GM12878 (cell line): ENCODE measurements at regions of chr12 and their contacts with region 1.

Region 1: GRCh38 chr12:96516472-96517430 is 27.4 kb downstream of the CFAP54 start:
- DNase-seq: peak; percentile 95
- ATAC-seq: peak; percentile 80
- H3K4me3 ChIP-seq: peak overlapping the region; percentile 24; the same call in 1 of the 2 replicates
- H3K27ac ChIP-seq: peak overlapping the region; percentile 64
- H3K4me1 ChIP-seq: peaks cover 16% of the 10 kb centered on the region
- H3K27me3 ChIP-seq: no peaks in the 10 kb centered on the region
- CTCF ChIP-seq: peak; percentile 42 to 87 (median 60); a peak in 5 of 6 replicates
- EP300 ChIP-seq: no peak
- POLR2A ChIP-seq: no peak
- RAD21 ChIP-seq: peak; percentile 91

Region 2: GRCh38 chr12:95380997-95381786 is 1135.6 kb before region 1 on chr12:
- CTCF ChIA-PET with region 1: no interaction called
- POLR2A ChIA-PET with region 1: no interaction called
- RAD21 ChIA-PET with region 1: no interaction called
- SMC1A ChIA-PET with region 1: no interaction called
- in situ Hi-C with region 1: no loop called
- intact Hi-C with region 1: no loop called
- DNase-seq: no peak
- ATAC-seq: no peak
- H3K4me3 ChIP-seq: no peak overlapping the region
- H3K27ac ChIP-seq: no peak overlapping the region
- H3K4me1 ChIP-seq: no peaks in the 10 kb centered on the region
- H3K27me3 ChIP-seq: no peaks in the 10 kb centered on the region; a peak in 2 of 4 replicates
- CTCF ChIP-seq: no peak
- EP300 ChIP-seq: no peak
- POLR2A ChIP-seq: no peak
- RAD21 ChIP-seq: no peak

Region 3: DNA sequence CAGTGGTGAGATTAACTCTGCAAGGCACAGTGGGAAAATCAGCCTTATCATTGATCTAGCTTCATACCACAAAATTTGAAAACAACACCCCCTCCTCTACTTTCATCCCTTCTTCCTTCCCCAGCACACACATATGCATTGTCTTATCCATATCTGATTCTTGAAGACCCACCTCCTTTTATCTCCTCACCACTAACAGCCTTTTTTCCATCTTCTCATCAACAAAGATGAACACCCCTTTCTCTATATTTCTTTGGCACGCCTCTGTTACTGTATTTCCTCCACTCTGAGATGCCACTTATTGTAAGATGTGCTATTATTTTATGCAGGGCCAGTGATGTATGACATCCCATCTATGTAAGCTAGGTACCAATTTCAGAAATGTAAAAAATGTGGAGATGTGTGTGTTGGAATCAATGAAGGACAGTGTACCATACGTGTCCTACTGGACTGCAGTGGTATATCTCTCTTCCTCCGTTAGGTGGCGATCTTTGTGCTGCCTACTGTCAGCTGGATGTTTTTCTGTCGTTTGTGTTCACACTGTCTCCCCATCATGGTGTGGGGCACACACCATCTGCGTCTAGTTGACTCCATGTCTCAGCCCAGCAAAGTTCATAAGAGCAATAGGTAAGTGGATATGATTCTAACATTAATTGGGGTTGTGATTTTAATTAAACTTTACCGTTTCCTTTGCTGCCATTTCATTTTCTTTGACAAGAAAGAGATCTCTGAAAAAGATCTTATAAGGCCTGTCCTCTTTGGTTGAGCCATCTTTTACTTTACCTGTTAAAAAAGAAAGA is 598.4 kb before region 1 on chr12:
- CTCF ChIA-PET with region 1: interaction called, 20 read pairs
- POLR2A ChIA-PET with region 1: no interaction called
- RAD21 ChIA-PET with region 1: interaction called, 6 read pairs
- SMC1A ChIA-PET with region 1: interaction called, 10 read pairs
- in situ Hi-C with region 1: no loop called
- intact Hi-C with region 1: loop called (anchors 5 kb)
- DNase-seq: no peak
- ATAC-seq: peak; percentile 99
- H3K4me3 ChIP-seq: no peak overlapping the region
- H3K27ac ChIP-seq: no peak overlapping the region
- H3K4me1 ChIP-seq: no peaks in the 10 kb centered on the region
- H3K27me3 ChIP-seq: peaks cover 2 to 3% of the 10 kb centered on the region in 2 experiments; a peak in 3 of 4 replicates
- CTCF ChIP-seq: peak; percentile 77 to 84 (median 80)
- EP300 ChIP-seq: no peak
- POLR2A ChIP-seq: no peak
- RAD21 ChIP-seq: peak; percentile 74

Region 4: GRCh38 chr12:96035278-96036236 is 481.2 kb before region 1 on chr12 and contains the start of gene LTA4H:
- CTCF ChIA-PET with region 1: interaction called, 12 read pairs
- POLR2A ChIA-PET with region 1: no interaction called
- RAD21 ChIA-PET with region 1: no interaction called
- SMC1A ChIA-PET with region 1: no interaction called
- in situ Hi-C with region 1: no loop called
- intact Hi-C with region 1: no loop called
- DNase-seq: peak; percentile 97
- ATAC-seq: peak; percentile 93
- H3K4me3 ChIP-seq: peak within 1 kb of the TSS; percentile 77
- H3K27ac ChIP-seq: peak within 1 kb of the TSS; percentile 38; the same call in 1 of the 2 replicates
- H3K4me1 ChIP-seq: peaks cover 4% of the 10 kb centered on the region; the same call in 1 of the 2 replicates
- H3K27me3 ChIP-seq: no peaks in the 10 kb centered on the region
- CTCF ChIP-seq: no peak
- EP300 ChIP-seq: no peak; a peak in 1 of 4 replicates
- POLR2A ChIP-seq: peak; percentile 95
- RAD21 ChIP-seq: no peak
- polyA plus RNA-seq, gene LTA4H: 47.2 to 47.4 TPM

Region 5: GRCh38 chr12:96208801-96209549 is 307.8 kb before region 1 on chr12:
- CTCF ChIA-PET with region 1: interaction called, 31 read pairs
- POLR2A ChIA-PET with region 1: no interaction called
- RAD21 ChIA-PET with region 1: interaction called, 62 read pairs
- SMC1A ChIA-PET with region 1: interaction called, 73 read pairs
- in situ Hi-C with region 1: loop called (anchors 5 kb)
- intact Hi-C with region 1: loop called (anchors 2 kb)
- DNase-seq: no peak
- ATAC-seq: peak; percentile 32
- H3K4me3 ChIP-seq: no peak overlapping the region
- H3K27ac ChIP-seq: no peak overlapping the region
- H3K4me1 ChIP-seq: peaks cover 35% of the 10 kb centered on the region
- H3K27me3 ChIP-seq: no peaks in the 10 kb centered on the region
- CTCF ChIP-seq: no peak
- EP300 ChIP-seq: no peak
- POLR2A ChIP-seq: no peak
- RAD21 ChIP-seq: no peak

Region 6: DNA sequence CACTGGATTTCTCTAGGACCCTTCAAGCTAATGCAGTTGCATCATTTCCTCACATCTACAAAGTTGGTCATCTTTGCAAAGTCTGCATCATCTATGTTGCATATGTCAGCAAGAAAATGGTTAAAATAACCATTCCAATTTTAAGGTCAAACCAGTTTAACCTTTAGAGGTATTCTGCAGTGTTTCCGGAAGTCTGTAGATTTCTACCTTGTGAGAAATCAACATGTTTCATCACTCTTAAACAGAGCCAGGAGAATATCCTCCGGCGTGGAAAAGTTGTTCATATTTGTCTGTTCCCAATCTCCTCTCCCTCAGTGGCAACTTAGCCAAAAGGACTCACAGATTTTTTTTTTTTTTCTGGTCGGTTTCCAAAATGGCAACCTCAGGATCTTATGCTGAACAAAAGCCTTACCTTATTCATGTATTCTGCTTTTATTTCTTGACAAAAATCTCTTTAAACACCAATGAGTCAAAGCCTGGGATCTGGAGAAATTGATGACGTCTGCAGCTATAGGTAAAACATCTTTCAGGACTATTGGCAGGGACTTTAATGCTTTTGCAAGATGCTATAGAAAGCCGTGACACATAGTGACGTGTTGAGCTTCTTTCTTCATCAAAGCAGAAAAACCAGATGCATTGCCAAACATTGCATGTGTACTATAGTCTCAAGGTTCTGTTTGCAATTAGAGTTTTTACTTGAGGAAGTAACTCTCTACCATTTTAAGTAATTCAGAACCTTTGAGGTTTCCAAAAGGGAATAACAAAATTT is 100.5 kb before region 1 on chr12:
- CTCF ChIA-PET with region 1: interaction called, 7 read pairs
- POLR2A ChIA-PET with region 1: no interaction called
- RAD21 ChIA-PET with region 1: interaction called, 9 read pairs
- SMC1A ChIA-PET with region 1: interaction called, 15 read pairs
- in situ Hi-C with region 1: no loop called
- intact Hi-C with region 1: no loop called
- DNase-seq: no peak
- ATAC-seq: no peak
- H3K4me3 ChIP-seq: no peak overlapping the region
- H3K27ac ChIP-seq: no peak overlapping the region
- H3K4me1 ChIP-seq: peaks cover 22% of the 10 kb centered on the region
- H3K27me3 ChIP-seq: no peaks in the 10 kb centered on the region
- CTCF ChIP-seq: no peak
- EP300 ChIP-seq: no peak
- POLR2A ChIP-seq: no peak
- RAD21 ChIP-seq: no peak

Region 7: DNA sequence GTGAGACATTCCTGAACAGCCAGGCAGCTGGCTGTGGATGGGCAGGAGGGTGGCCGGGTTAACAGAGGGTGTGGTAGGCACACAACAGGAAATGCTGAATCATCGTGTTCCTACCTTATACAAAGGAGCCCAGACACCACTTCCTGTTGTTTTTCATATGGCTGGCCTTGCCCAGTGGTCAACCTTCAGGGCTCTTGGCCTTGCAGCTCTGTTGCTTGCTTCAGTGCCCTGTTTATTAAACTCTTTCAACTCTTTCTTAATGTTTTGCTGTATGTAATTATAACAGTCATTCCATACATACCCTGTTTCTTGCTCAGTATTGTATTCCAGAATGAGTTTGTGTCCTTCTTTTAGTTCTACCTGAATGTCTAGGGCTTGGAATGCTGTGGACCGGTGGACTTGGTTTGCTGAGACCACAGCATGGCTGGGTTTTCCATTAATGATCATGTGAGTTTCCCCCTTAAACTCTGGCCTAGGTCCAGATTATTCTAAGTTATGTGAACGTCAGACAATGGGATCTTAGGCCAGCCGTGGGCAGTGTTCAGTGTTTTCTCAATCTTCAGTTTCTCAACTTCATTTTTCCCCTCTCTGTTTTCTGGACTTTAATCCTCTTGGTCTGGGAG is 15.5 kb before region 1 on chr12:
- CTCF ChIA-PET with region 1: interaction called, 304 read pairs
- POLR2A ChIA-PET with region 1: interaction called, 7 read pairs
- RAD21 ChIA-PET with region 1: interaction called, 57 read pairs
- SMC1A ChIA-PET with region 1: interaction called, 237 read pairs
- in situ Hi-C with region 1: no loop called
- intact Hi-C with region 1: loop called (anchors 2 kb)
- DNase-seq: peak; percentile 69
- ATAC-seq: peak; percentile 90
- H3K4me3 ChIP-seq: no peak overlapping the region
- H3K27ac ChIP-seq: peak overlapping the region; percentile 62
- H3K4me1 ChIP-seq: peaks cover 33% of the 10 kb centered on the region
- H3K27me3 ChIP-seq: no peaks in the 10 kb centered on the region
- CTCF ChIP-seq: no peak
- EP300 ChIP-seq: no peak
- POLR2A ChIP-seq: no peak
- RAD21 ChIP-seq: no peak

Region 8: DNA sequence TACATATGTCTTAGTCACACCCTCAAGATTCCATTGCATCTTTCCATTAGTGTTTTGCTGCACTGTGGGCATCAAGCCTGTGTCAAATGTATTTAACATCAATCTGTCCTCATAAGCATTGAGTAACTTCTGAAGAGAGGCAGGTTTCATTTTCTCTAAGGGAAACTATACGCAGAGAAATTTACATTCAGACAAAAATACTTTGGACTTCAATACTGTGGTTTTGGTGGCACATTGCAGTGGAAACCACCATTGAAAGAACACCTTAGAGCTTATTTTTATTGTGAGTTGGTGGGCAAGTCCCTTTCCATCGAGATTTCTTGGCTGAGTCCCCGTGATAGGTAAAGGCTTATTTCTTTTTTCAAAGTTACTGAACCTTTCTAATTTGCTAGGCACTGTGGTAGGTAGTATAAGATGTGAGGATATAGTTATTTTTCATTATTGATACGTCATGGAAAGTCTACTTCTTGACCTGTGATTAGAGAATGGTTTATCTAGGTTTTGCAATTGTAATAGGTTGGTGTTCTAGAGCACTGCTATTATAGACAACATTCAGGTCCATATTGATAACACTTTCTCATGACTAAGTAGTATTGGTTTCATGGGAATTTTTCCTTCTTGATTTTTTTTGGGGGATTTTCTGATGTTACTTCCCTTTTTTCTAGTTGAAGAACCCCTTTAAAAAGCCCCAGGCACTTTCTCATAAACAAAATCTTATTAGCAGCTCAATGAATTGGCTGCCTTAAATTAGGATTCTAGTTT is 54.5 kb after region 1 on chr12:
- CTCF ChIA-PET with region 1: interaction called, 29 read pairs
- POLR2A ChIA-PET with region 1: interaction called, 10 read pairs
- RAD21 ChIA-PET with region 1: interaction called, 30 read pairs
- SMC1A ChIA-PET with region 1: interaction called, 21 read pairs
- in situ Hi-C with region 1: no loop called
- intact Hi-C with region 1: loop called (anchors 2 kb)
- DNase-seq: peak; percentile 93
- ATAC-seq: peak; percentile 87
- H3K4me3 ChIP-seq: peak overlapping the region; percentile 22; the same call in 1 of the 2 replicates
- H3K27ac ChIP-seq: peak overlapping the region; percentile 88
- H3K4me1 ChIP-seq: peaks cover 20% of the 10 kb centered on the region
- H3K27me3 ChIP-seq: no peaks in the 10 kb centered on the region
- CTCF ChIP-seq: no peak
- EP300 ChIP-seq: peak; percentile 74 to 77
- POLR2A ChIP-seq: no peak
- RAD21 ChIP-seq: no peak

Region 9: DNA sequence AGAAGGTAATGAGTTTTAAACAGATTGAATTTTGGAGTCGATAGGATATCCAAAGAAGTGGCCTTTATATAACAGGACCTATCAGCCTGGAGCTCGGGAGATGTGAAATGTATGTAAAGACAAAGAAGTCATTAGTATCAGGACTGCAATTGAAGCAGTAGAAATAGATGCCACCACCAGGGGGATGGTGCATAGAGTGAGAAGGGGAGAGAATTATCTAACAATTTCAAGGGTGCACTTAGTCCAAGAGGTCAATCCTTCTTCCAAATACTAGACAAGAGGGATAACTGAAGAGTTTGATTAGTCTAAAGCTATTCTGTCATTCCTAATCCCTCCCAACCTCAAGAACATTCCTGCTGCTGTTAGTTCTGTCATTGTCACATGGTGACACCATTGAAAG is 100.4 kb after region 1 on chr12:
- CTCF ChIA-PET with region 1: no interaction called
- POLR2A ChIA-PET with region 1: no interaction called
- RAD21 ChIA-PET with region 1: no interaction called
- SMC1A ChIA-PET with region 1: no interaction called
- in situ Hi-C with region 1: no loop called
- intact Hi-C with region 1: no loop called
- DNase-seq: no peak
- ATAC-seq: peak; percentile 51; the same call in 2 of the 3 replicates
- H3K4me3 ChIP-seq: no peak overlapping the region
- H3K27ac ChIP-seq: no peak overlapping the region
- H3K4me1 ChIP-seq: no peaks in the 10 kb centered on the region
- H3K27me3 ChIP-seq: no peaks in the 10 kb centered on the region
- CTCF ChIP-seq: 0 out of 6 replicates have a peak, but pooled peaks of 2 of the 3 experiments have one; percentile 16 to 17
- EP300 ChIP-seq: no peak
- POLR2A ChIP-seq: no peak
- RAD21 ChIP-seq: no peak

Region 10: GRCh38 chr12:97275256-97275655 is 758.5 kb after region 1 on chr12:
- CTCF ChIA-PET with region 1: no interaction called
- POLR2A ChIA-PET with region 1: no interaction called
- RAD21 ChIA-PET with region 1: no interaction called
- SMC1A ChIA-PET with region 1: no interaction called
- in situ Hi-C with region 1: no loop called
- intact Hi-C with region 1: no loop called
- DNase-seq: no peak
- ATAC-seq: no peak
- H3K4me3 ChIP-seq: no peak overlapping the region
- H3K27ac ChIP-seq: no peak overlapping the region
- H3K4me1 ChIP-seq: no peaks in the 10 kb centered on the region
- H3K27me3 ChIP-seq: no peaks in the 10 kb centered on the region; a peak in 1 of 4 replicates
- CTCF ChIP-seq: no peak
- EP300 ChIP-seq: no peak
- POLR2A ChIP-seq: no peak
- RAD21 ChIP-seq: no peak